CD4-positive, alpha-beta T cell (primary cell): ENCODE measurements at regions of chr10 and their contacts with region 1.

Region 1: DNA sequence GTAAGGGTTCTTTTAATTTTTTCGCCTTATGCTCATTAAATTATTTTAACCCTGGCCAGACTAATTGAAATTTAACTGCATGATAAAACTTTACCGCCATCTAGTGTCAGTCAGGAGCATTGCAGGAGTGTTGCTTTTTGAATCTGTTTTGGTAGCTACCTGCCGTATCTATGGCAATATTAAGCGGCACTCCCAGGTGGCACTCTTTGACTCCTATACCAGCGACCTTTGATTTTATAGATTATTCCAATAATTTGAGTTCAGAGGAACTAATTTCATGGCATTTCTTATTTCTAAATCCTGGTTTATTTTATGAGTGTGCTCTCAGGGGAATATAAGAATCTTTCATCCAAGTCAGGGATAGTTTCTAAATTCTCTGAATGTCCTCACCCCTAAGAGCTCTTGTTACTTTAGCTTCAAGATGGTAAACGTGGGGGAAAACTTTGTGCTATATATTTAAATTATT is 198.9 kb downstream of the REEP3 start:
- DNase-seq: peak in 13 of 14 experiments; percentile 9 to 79 (median 33)
- ATAC-seq: peak; percentile 88
- H3K4me3 ChIP-seq: no peak overlapping the region
- H3K4me3 Mint-ChIP-seq: no peak overlapping the region
- H3K27ac ChIP-seq: no peak overlapping the region
- H3K27ac Mint-ChIP-seq: peak overlapping the region; percentile 19
- H3K4me1 ChIP-seq: peaks cover 4% of the 10 kb centered on the region
- H3K4me1 Mint-ChIP-seq: peaks cover 10% of the 10 kb centered on the region
- H3K27me3 ChIP-seq: peaks cover 0 to 10% of the 10 kb centered on the region in 2 experiments
- H3K27me3 Mint-ChIP-seq: peaks cover 4% of the 10 kb centered on the region
- CTCF ChIP-seq: peak; percentile 99

Region 2: GRCh38 chr10:62437696-62438095 is 1282.4 kb before region 1 on chr10:
- CTCF ChIA-PET with region 1: interaction called, 4 read pairs
- POLR2A ChIA-PET with region 1: no interaction called
- intact Hi-C with region 1: loop called (anchors 5 to 10 kb)
- DNase-seq: peak in 5 of 14 experiments; percentile 0 to 74 (median 73)
- ATAC-seq: peak; percentile 59
- H3K4me3 ChIP-seq: no peak overlapping the region
- H3K4me3 Mint-ChIP-seq: no peak overlapping the region
- H3K27ac ChIP-seq: no peak overlapping the region
- H3K27ac Mint-ChIP-seq: no peak overlapping the region
- H3K4me1 ChIP-seq: no peaks in the 10 kb centered on the region
- H3K4me1 Mint-ChIP-seq: no peaks in the 10 kb centered on the region
- H3K27me3 ChIP-seq: no peaks in the 10 kb centered on the region
- H3K27me3 Mint-ChIP-seq: peaks cover 7% of the 10 kb centered on the region
- CTCF ChIP-seq: peak; percentile 83

Region 3: GRCh38 chr10:62594093-62594520 is 1126.0 kb before region 1 on chr10:
- CTCF ChIA-PET with region 1: interaction called, 4 read pairs
- POLR2A ChIA-PET with region 1: no interaction called
- intact Hi-C with region 1: loop called (anchors 5 kb)
- DNase-seq: peak; percentile 14 to 74 (median 38)
- ATAC-seq: peak; percentile 65
- H3K4me3 ChIP-seq: no peak overlapping the region
- H3K4me3 Mint-ChIP-seq: no peak overlapping the region
- H3K27ac ChIP-seq: no peak overlapping the region
- H3K27ac Mint-ChIP-seq: no peak overlapping the region
- H3K4me1 ChIP-seq: no peaks in the 10 kb centered on the region
- H3K4me1 Mint-ChIP-seq: no peaks in the 10 kb centered on the region
- H3K27me3 ChIP-seq: no peaks in the 10 kb centered on the region
- H3K27me3 Mint-ChIP-seq: no peaks in the 10 kb centered on the region
- CTCF ChIP-seq: peak; percentile 93

Region 4: GRCh38 chr10:63166742-63167258 is 553.3 kb before region 1 on chr10:
- CTCF ChIA-PET with region 1: interaction called, 35 read pairs
- POLR2A ChIA-PET with region 1: interaction called, 33 read pairs
- intact Hi-C with region 1: loop called (anchors 1 kb)
- DNase-seq: peak in 4 of 14 experiments; percentile 30 to 80 (median 72)
- ATAC-seq: peak; percentile 82
- H3K4me3 ChIP-seq: no peak overlapping the region
- H3K4me3 Mint-ChIP-seq: no peak overlapping the region
- H3K27ac ChIP-seq: no peak overlapping the region
- H3K27ac Mint-ChIP-seq: peak overlapping the region; percentile 69
- H3K4me1 ChIP-seq: no peaks in the 10 kb centered on the region
- H3K4me1 Mint-ChIP-seq: peaks cover 6% of the 10 kb centered on the region
- H3K27me3 ChIP-seq: no peaks in the 10 kb centered on the region
- H3K27me3 Mint-ChIP-seq: no peaks in the 10 kb centered on the region
- CTCF ChIP-seq: peak; percentile 88

Region 5: DNA sequence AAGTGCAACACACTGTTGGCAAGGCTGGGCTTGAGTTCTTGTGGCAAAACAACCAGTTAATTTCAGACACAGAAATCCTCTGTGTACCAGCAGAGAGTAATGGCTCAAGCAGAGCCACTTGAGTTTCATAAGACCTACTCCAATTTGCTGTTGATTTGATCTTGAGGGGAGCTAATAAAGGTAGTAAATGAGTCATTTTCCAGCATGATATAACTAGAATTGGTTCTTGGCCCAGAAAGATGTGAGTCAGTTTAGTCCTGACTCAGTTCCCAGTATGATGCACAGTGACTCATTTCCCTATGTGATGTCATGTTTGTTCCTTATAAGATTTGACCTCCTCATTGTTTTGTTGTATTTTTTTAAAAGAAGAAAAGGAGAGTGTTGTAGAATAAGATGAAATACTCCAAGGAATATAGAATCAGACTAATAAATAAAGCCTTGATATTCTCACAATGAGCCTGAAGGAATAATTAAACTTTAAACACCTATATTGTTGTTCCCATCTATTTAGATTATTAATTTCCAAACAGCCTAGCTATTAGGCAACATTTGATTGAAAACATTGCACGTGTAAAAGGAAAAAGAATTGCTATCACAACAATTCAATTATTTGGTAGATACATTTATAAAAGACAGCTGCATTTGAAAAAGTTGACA is 12.7 kb before region 1 on chr10:
- CTCF ChIA-PET with region 1: interaction called, 12 read pairs
- POLR2A ChIA-PET with region 1: no interaction called
- intact Hi-C with region 1: no loop called
- DNase-seq: peak in 4 of 14 experiments; percentile 19 to 68 (median 39)
- ATAC-seq: peak; percentile 29
- H3K4me3 ChIP-seq: no peak overlapping the region
- H3K4me3 Mint-ChIP-seq: no peak overlapping the region
- H3K27ac ChIP-seq: no peak overlapping the region
- H3K27ac Mint-ChIP-seq: no peak overlapping the region
- H3K4me1 ChIP-seq: peaks cover 2% of the 10 kb centered on the region
- H3K4me1 Mint-ChIP-seq: no peaks in the 10 kb centered on the region
- H3K27me3 ChIP-seq: no peaks in the 10 kb centered on the region
- H3K27me3 Mint-ChIP-seq: no peaks in the 10 kb centered on the region
- CTCF ChIP-seq: no peak